Motor neuron (in vitro differentiated cells): ENCODE measurements at regions of chr1 and their contacts with region 1.

Region 1: GRCh38 chr1:52697795-52698674 is at the start of gene COA7:
- ATAC-seq: peak; percentile 72 to 81 (median 75)
- H3K4me3 ChIP-seq: peak within 1 kb of the TSS; percentile 49 to 58 (median 52)
- H3K27ac ChIP-seq: peak within 1 kb of the TSS; percentile 71 to 72
- H3K4me1 ChIP-seq: peaks cover 7 to 10% of the 10 kb centered on the region in 2 donors
- total RNA-seq, gene COA7: 16.3 to 27.6 (median 20.9) TPM

Region 2: DNA sequence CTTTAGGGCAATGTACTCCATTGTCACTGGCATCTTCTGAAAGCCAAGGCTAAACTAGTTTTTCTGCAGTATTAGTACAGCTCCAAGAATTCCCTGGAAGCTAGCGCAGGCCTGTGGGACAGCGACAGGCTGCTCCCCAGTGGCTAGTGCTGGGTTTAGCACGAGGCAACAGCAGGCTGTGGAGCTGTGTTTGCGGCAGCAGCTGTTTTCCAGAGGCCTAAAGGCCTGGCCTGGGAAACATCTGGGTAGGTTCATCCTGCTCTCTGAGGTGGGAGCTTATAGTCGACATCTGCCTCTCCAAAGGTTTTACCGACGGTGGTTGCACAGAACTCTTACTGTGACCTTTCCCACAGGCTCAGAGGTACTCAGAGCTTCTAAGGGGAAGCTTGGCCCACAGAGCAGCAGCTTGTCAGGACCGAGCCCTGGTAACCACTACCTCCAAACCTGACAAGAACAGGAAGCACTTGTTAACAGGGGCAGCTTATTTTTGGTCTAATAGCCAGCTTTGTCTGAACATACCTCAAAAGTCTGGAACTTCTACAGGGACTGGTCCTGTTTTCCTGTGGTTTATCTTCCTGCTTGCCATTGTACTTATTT is 349.2 kb before region 1 on chr1:
- in situ Hi-C with region 1: no loop called
- ATAC-seq: peak; percentile 59 to 91 (median 69)
- H3K4me3 ChIP-seq: no peak overlapping the region
- H3K27ac ChIP-seq: no peak overlapping the region
- H3K4me1 ChIP-seq: peaks cover 9 to 10% of the 10 kb centered on the region in 2 donors

Region 3: GRCh38 chr1:52426371-52426770 is 271.7 kb before region 1 on chr1:
- in situ Hi-C with region 1: loop called in 1 of 9 experiments (anchors 25 kb)
- ATAC-seq: no peak
- H3K4me3 ChIP-seq: no peak overlapping the region
- H3K27ac ChIP-seq: no peak overlapping the region
- H3K4me1 ChIP-seq: no peaks in the 10 kb centered on the region

Region 4: DNA sequence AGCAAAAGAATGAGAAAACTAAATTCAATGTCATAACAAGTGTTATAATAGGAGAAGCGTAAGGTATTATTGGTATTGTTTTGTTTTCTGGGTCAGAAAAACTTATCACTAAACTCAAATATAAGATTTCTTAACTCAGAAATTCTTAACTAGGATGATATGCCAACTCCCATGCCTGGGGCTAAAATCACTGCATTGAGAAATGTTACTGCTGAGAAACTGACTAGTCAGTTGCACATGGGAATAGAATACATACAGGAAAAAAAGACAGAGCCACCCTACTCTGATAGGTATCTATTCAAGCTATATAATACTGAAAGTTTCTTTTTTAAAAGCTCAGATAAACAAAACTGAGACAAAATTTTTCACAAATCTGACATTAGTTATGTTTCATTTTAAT is 237.3 kb before region 1 on chr1:
- in situ Hi-C with region 1: loop called in 1 of 9 experiments (anchors 25 kb)
- ATAC-seq: peak in 3 of 8 experiments; percentile 67 to 88 (median 85)
- H3K4me3 ChIP-seq: no peak overlapping the region
- H3K27ac ChIP-seq: no peak overlapping the region
- H3K4me1 ChIP-seq: no peaks in the 10 kb centered on the region

Region 5: DNA sequence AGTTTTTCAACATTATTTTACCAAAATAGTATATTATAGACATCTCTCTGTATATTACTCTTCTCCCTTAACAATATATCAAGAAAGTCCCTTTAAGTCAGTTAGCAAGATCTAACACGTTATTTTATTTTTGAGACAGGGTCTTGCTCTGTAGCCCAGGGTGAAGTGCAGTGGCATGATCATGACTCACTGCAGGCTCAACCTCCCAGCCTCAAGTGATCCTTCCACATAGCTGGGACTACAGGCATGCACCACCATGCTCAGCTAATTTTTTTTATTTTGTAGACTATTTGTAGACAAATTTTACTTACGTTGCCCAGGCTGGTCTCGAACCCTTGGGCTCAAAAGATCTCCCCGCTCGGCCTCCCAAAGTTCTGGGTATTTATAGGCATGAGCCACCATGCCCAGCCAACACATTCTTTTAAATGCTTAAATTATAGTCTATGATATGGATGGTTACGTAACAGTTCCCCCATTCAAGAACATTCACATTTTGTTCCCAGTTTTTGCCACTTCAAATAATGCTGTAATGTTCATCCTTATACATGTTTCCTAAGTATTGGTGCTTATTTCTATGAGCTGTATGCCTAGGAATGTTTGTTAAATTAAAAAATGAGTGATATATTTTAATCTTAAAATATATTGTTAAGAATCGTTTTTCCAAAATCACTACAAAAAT is 215.6 kb before region 1 on chr1:
- in situ Hi-C with region 1: loop called in 1 of 9 experiments (anchors 25 kb)
- ATAC-seq: no peak
- H3K4me3 ChIP-seq: no peak overlapping the region
- H3K27ac ChIP-seq: no peak overlapping the region
- H3K4me1 ChIP-seq: no peaks in the 10 kb centered on the region